ENCODE measurements at regions of chr4 and their contacts with region 1.

Region 1: GRCh38 chr4:159206427-159206871 is 103.6 kb downstream of the RAPGEF2 start:
- DNase-seq: no peak
- ATAC-seq: no peak

Region 2: DNA sequence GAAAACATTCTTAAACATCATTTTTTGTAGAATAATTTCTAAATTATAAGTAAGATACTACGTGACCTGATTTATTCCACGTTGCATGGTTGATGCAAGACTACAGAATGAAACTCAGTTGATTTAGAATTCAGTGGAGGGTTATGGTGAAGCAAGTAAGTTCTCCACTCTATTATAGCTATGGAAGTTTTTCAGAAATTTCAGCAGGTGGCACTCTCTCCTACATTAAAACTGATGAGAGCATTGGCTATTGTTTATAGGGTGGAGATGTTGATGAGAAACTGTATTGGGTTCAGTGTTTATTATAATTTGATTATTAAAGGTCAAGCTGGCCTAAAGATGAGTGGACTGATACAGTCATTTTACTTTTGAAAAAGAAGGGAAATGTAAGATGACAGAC is 349.6 kb before region 1 on chr4:
- intact Hi-C with region 1: loop called (anchors 10 kb)
- DNase-seq: no peak
- ATAC-seq: peak; percentile 90